ENCODE measurements at regions of chr18 and their contacts with region 1.

Region 1: DNA sequence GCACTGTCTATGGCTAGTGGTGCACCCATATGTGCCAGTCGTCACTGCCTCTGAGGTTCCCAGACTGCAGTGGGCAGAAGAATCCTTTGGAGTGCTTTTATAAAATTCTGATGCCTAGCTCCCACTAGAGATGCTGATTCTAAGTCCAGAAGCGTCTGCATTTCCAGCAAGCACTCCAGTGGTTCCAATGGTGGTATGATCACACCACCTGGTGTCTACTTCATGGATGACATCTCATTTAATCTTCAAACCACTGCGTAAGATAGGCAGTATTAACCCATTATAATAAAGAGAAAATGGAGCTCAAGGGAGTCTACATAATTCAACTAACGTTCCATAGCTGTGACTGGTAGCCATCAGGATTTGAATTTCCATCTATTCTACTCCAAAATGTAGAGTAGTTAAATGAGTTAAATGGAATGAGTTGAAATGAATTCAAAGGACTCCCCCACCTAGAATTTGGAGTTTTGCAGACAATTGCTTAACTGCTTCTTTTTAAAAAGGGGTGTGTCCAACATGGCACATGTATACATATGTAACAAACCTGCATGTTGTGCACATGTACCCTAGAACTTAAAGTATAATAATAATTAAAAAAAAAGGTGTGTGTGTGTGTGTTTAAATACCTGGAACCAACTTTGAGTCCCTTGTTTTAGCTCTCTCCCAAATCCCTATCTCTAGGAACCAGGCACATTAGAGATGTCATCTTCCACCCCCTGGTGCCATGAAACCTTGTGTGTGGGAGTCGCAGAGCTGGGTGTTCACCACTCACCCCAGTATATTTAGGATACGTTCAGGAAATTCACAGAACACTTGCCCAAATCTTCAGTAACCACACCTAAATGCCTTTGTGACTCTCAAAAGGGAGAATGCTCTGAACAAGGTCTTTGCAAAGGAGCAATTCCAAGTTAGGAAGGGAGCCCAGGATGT is 14.1 kb downstream of the LAMA3 start:
- DNase-seq: peak; percentile 76
- H3K4me3 Mint-ChIP-seq: no peak overlapping the region
- H3K27ac Mint-ChIP-seq: no peak overlapping the region
- H3K4me1 Mint-ChIP-seq: peaks cover 5% of the 10 kb centered on the region
- H3K27me3 Mint-ChIP-seq: no peaks in the 10 kb centered on the region
- CTCF ChIP-seq: peak; percentile 62

Region 2: GRCh38 chr18:23012249-23012648 is 691.1 kb before region 1 on chr18:
- CTCF ChIA-PET with region 1: no interaction called
- POLR2A ChIA-PET with region 1: no interaction called
- intact Hi-C with region 1: no loop called
- DNase-seq: no peak
- H3K4me3 Mint-ChIP-seq: no peak overlapping the region
- H3K27ac Mint-ChIP-seq: no peak overlapping the region
- H3K4me1 Mint-ChIP-seq: no peaks in the 10 kb centered on the region
- H3K27me3 Mint-ChIP-seq: no peaks in the 10 kb centered on the region
- CTCF ChIP-seq: no peak

Region 3: DNA sequence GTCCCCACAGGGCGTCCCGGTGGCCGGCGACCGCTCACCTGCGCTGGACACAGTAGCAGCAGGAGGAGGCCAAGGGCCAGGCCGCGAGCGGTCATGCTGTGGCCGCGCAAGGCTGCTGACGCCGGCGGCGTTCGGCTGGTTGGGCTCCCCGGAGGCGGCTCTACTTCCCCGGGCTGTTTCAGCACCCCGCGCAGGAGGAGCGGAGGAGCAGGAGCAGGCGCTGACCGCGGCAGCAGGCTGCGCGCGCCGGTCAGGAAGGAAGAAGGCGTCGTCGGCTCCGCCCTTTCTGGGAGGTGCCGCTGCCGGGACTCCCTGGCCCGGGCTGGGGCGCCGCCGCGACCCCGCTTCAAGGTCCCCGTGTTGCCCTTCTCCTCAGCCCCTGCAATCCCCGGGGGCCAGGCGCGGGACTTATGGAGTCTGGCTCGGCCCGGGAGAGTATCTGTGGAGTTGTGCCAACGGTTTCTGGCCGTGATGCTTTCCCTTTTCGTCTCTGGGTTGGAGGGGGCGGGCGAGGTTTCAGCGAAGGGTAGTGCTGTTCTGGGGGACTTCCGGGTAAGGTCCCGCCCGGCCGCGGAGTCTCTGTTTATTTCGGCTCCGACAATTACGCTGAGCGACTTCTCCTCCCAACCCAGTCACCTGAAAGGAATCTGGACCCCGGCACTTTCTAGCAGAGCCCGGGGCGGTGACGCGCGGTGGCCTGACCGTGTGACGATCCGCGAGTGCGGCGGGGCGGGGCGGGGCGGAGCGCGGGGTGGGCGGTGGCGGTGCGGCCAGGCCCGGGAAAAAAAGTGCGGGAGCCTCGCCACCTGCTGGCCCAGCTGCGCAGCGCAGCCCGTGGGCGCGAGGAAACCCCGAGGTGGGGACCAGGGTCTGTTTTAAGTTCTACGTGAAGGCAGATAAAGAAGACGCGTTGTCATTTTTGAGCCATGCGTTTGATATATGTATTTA is 116.8 kb before region 1 on chr18 and contains the start of gene NPC1:
- CTCF ChIA-PET with region 1: interaction called, 13 read pairs
- POLR2A ChIA-PET with region 1: no interaction called
- intact Hi-C with region 1: no loop called
- DNase-seq: peak; percentile 93
- H3K4me3 Mint-ChIP-seq: peak within 1 kb of the TSS; percentile 84
- H3K27ac Mint-ChIP-seq: peak within 1 kb of the TSS; percentile 98
- H3K4me1 Mint-ChIP-seq: peaks cover 13% of the 10 kb centered on the region
- H3K27me3 Mint-ChIP-seq: no peaks in the 10 kb centered on the region
- CTCF ChIP-seq: peak; percentile 90
- total RNA-seq, gene NPC1: 60.4 and 78.8 TPM in 2 replicates

Region 4: GRCh38 chr18:23619388-23619881 is 83.9 kb before region 1 on chr18:
- CTCF ChIA-PET with region 1: interaction called, 211 read pairs
- POLR2A ChIA-PET with region 1: interaction called, 23 read pairs
- intact Hi-C with region 1: loop called (anchors 1 kb)
- DNase-seq: no peak
- H3K4me3 Mint-ChIP-seq: no peak overlapping the region
- H3K27ac Mint-ChIP-seq: no peak overlapping the region
- H3K4me1 Mint-ChIP-seq: peaks cover 6% of the 10 kb centered on the region
- H3K27me3 Mint-ChIP-seq: peaks cover 12% of the 10 kb centered on the region
- CTCF ChIP-seq: no peak

Region 5: DNA sequence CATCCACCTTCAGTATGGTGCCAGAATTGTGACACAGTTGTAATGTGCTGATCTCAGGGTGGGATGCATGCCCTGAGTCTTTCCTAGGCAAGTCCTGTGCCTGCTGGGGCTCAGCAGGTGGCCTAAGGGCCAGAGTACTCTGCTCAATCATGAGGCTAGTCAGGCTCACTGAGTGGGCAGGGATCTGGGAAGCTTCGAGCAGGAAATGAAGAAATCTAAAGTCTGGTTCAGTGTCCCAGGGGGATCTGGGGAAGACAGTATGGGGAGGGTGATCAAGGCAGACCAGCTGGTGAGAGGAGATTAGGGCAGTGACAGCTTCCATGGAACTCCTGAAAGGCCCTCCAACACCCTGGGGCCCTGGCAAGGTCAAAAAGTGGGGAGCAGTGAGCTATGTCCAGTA is 31.8 kb before region 1 on chr18:
- CTCF ChIA-PET with region 1: interaction called, 11 read pairs
- POLR2A ChIA-PET with region 1: no interaction called
- intact Hi-C with region 1: no loop called
- DNase-seq: no peak
- H3K4me3 Mint-ChIP-seq: no peak overlapping the region
- H3K27ac Mint-ChIP-seq: no peak overlapping the region
- H3K4me1 Mint-ChIP-seq: peaks cover 10% of the 10 kb centered on the region
- H3K27me3 Mint-ChIP-seq: no peaks in the 10 kb centered on the region
- CTCF ChIP-seq: no peak

Region 6: GRCh38 chr18:23763343-23763742 is 60.0 kb after region 1 on chr18:
- CTCF ChIA-PET with region 1: no interaction called
- POLR2A ChIA-PET with region 1: no interaction called
- intact Hi-C with region 1: no loop called
- DNase-seq: no peak
- H3K4me3 Mint-ChIP-seq: no peak overlapping the region
- H3K27ac Mint-ChIP-seq: no peak overlapping the region
- H3K4me1 Mint-ChIP-seq: no peaks in the 10 kb centered on the region
- H3K27me3 Mint-ChIP-seq: no peaks in the 10 kb centered on the region
- CTCF ChIP-seq: no peak

Region 7: GRCh38 chr18:23793978-23794867 is 90.9 kb after region 1 on chr18:
- CTCF ChIA-PET with region 1: no interaction called
- POLR2A ChIA-PET with region 1: no interaction called
- intact Hi-C with region 1: no loop called
- DNase-seq: no peak
- H3K4me3 Mint-ChIP-seq: no peak overlapping the region
- H3K27ac Mint-ChIP-seq: no peak overlapping the region
- H3K4me1 Mint-ChIP-seq: no peaks in the 10 kb centered on the region
- H3K27me3 Mint-ChIP-seq: no peaks in the 10 kb centered on the region
- CTCF ChIP-seq: no peak

Region 8: DNA sequence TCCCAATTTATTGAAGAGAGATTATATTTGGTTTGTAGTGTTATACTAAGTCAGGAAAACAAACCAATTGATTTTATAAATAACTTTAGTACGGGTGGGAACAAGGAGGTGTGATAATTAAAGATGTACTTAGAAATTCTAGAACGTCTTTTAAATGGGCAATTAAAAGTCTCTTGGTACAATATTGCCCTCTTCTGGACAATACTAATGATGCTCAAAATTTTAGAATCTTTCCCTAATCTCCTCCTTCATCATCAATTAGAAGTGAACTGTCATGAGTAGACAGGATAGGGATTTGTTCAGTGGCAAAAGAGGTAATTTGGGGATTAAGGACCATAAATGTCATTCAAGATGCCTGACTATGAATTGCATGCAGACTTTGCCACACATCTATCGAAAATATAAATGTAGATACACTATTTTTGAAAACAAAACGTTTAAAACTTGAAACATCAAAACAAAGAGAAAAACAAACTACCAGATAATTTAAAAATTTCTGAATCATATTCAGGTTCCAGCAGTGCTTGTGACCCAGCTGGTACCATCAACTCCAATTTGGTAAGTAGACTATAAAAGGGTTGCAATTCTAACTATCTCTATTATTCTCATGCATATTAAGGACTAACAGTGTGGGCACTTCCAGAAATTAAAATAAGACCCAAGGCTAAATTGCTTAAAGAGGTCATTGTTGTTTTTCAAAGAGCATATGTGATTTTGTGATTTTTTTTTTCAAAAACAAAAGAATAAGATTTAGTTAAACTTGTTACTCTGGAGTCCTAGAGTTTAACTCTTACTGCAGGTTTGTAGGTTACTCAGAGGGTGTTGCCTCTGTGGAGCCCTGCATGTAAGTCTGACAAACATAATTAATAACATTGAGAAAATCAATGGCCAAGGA is 109.5 kb after region 1 on chr18:
- CTCF ChIA-PET with region 1: interaction called, 30 read pairs
- POLR2A ChIA-PET with region 1: interaction called, 4 read pairs
- intact Hi-C with region 1: loop called (anchors 1 kb)
- DNase-seq: peak; percentile 35
- H3K4me3 Mint-ChIP-seq: no peak overlapping the region
- H3K27ac Mint-ChIP-seq: no peak overlapping the region
- H3K4me1 Mint-ChIP-seq: no peaks in the 10 kb centered on the region
- H3K27me3 Mint-ChIP-seq: no peaks in the 10 kb centered on the region
- CTCF ChIP-seq: peak; percentile 59

Region 9: DNA sequence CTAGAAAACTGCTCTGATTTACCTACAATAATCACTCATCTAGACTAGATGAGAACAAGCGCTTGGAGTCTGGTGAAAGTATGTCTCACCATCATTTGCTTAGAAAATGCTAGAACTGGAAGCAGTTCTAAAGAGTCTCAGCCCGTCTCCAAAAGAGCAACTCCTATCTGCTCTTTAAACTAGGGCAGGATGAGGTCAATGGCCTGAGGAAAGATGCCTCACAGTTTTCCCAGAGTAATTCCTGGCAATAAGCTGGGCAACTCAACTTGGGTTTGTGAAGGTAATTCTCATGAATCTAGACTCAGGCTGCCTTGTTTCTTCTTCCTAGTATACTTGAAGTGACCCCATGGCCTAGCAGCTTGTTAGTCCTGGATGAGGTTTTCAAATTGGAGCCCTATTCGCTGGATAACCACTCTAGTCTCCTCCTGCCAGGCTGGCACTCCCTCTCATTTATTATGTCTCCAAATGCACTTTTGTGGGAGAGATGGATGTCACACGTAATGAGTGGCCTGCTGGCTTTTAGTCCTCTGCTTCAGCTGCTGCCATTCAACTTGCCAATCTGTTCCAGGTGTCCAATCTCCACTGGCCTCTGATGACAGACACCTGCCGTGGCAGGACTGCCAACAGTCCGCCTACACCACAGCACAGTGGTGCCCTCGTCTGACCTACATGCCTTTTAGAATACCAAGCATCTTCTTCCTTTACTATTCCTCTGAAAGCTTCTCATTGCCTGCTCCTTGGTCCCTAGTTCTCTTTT is 516.4 kb after region 1 on chr18:
- CTCF ChIA-PET with region 1: no interaction called
- POLR2A ChIA-PET with region 1: no interaction called
- intact Hi-C with region 1: no loop called
- DNase-seq: no peak
- H3K4me3 Mint-ChIP-seq: no peak overlapping the region
- H3K27ac Mint-ChIP-seq: no peak overlapping the region
- H3K4me1 Mint-ChIP-seq: peaks cover 11% of the 10 kb centered on the region
- H3K27me3 Mint-ChIP-seq: no peaks in the 10 kb centered on the region
- CTCF ChIP-seq: no peak